B cell (primary cell): ENCODE measurements at regions of chr5 and their contacts with region 1.

Region 1: GRCh38 chr5:178232124-178232919 is at the start of gene PHYKPL:
- DNase-seq: peak; percentile 83
- ATAC-seq: peak; percentile 71
- H3K4me3 ChIP-seq: peak within 1 kb of the TSS; percentile 49 to 85 (median 71)
- H3K4me3 Mint-ChIP-seq: peak within 1 kb of the TSS; percentile 87
- H3K27ac ChIP-seq: peak within 1 kb of the TSS; percentile 77 to 88
- H3K27ac Mint-ChIP-seq: peak within 1 kb of the TSS; percentile 93
- H3K4me1 ChIP-seq: peaks cover 21 to 46% of the 10 kb centered on the region in 2 donors
- H3K4me1 Mint-ChIP-seq: peaks cover 50% of the 10 kb centered on the region
- H3K27me3 ChIP-seq: no peaks in the 10 kb centered on the region
- H3K27me3 Mint-ChIP-seq: no peaks in the 10 kb centered on the region
- CTCF ChIP-seq: no peak
- total RNA-seq, gene PHYKPL: 263 and 275 TPM in 2 replicates

Region 2: DNA sequence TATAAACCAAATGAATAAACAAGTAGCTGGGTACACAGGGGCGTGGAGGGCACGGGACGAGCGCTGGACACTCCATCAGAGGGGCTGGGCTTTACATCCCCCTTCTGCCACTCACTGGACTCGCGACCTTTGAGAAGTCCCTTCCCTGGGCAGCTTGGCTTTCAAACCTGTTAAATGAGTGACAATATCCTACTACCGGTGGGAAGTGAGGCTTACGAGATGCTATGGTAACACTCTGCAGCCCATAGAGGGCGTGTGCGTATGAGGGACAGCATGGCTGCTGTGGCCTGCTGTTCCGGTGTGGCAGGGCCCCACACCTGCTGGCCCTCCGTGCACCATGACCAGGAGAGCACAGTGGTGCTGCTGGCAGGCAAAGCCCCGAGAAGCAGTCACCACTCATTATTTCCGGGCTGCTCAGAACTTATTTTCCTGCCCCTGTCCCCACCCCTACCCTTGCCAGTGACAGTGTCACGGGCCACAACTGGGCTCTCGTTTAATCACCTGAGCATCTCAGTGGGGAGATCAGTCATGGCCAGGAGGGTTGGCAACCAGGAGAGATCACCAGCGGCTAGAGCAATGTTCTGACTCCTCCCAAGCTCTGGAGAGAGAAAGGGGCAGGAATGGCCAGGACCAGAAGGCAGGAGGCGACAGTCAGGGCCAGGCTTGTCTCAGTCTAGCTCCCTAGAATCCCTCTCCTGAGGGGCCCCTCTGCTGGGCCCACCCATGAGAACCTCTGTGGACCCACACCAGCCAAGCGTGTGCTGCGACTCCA is 1826.5 kb before region 1 on chr5:
- CTCF ChIA-PET with region 1: no interaction called
- POLR2A ChIA-PET with region 1: no interaction called
- intact Hi-C with region 1: no loop called
- DNase-seq: no peak
- ATAC-seq: no peak
- H3K4me3 ChIP-seq: no peak overlapping the region
- H3K4me3 Mint-ChIP-seq: no peak overlapping the region
- H3K27ac ChIP-seq: no peak overlapping the region
- H3K27ac Mint-ChIP-seq: no peak overlapping the region
- H3K4me1 ChIP-seq: no peaks in the 10 kb centered on the region
- H3K4me1 Mint-ChIP-seq: no peaks in the 10 kb centered on the region
- H3K27me3 ChIP-seq: no peaks in the 10 kb centered on the region
- H3K27me3 Mint-ChIP-seq: no peaks in the 10 kb centered on the region
- CTCF ChIP-seq: no peak

Region 3: GRCh38 chr5:178204182-178204894 is 28.0 kb before region 1 on chr5 and contains the start of gene HNRNPAB:
- CTCF ChIA-PET with region 1: interaction called, 4 read pairs
- POLR2A ChIA-PET with region 1: interaction called, 12 read pairs
- intact Hi-C with region 1: loop called (anchors 1 kb)
- DNase-seq: peak; percentile 99
- ATAC-seq: peak; percentile 80
- H3K4me3 ChIP-seq: peak within 1 kb of the TSS; percentile 60 to 94 (median 80)
- H3K4me3 Mint-ChIP-seq: peak within 1 kb of the TSS; percentile 99
- H3K27ac ChIP-seq: peak within 1 kb of the TSS; percentile 55 to 79
- H3K27ac Mint-ChIP-seq: peak within 1 kb of the TSS; percentile 100
- H3K4me1 ChIP-seq: peaks cover 12 to 18% of the 10 kb centered on the region in 2 donors
- H3K4me1 Mint-ChIP-seq: peaks cover 30% of the 10 kb centered on the region
- H3K27me3 ChIP-seq: no peaks in the 10 kb centered on the region
- H3K27me3 Mint-ChIP-seq: no peaks in the 10 kb centered on the region
- CTCF ChIP-seq: no peak
- total RNA-seq, gene HNRNPAB: 70.6 and 75.1 TPM in 2 replicates

Region 4: GRCh38 chr5:178324481-178325310 is 92.4 kb after region 1 on chr5:
- CTCF ChIA-PET with region 1: no interaction called
- POLR2A ChIA-PET with region 1: no interaction called
- intact Hi-C with region 1: no loop called
- DNase-seq: peak; percentile 36
- ATAC-seq: peak; percentile 71
- H3K4me3 ChIP-seq: peak overlapping the region in 3 of 5 experiments; percentile 8 to 29 (median 26)
- H3K4me3 Mint-ChIP-seq: peak overlapping the region; percentile 72
- H3K27ac ChIP-seq: no peak overlapping the region
- H3K27ac Mint-ChIP-seq: peak overlapping the region; percentile 50
- H3K4me1 ChIP-seq: peaks cover 4 to 22% of the 10 kb centered on the region in 2 donors
- H3K4me1 Mint-ChIP-seq: peaks cover 17% of the 10 kb centered on the region
- H3K27me3 ChIP-seq: peaks cover 0 to 3% (median 0%) of the 10 kb centered on the region in 4 experiments
- H3K27me3 Mint-ChIP-seq: peaks cover 8% of the 10 kb centered on the region
- CTCF ChIP-seq: no peak

Region 5: GRCh38 chr5:178551059-178551458 is 318.7 kb after region 1 on chr5:
- CTCF ChIA-PET with region 1: interaction called, 12 read pairs
- POLR2A ChIA-PET with region 1: no interaction called
- intact Hi-C with region 1: no loop called
- DNase-seq: no peak
- ATAC-seq: no peak
- H3K4me3 ChIP-seq: no peak overlapping the region
- H3K4me3 Mint-ChIP-seq: no peak overlapping the region
- H3K27ac ChIP-seq: no peak overlapping the region
- H3K27ac Mint-ChIP-seq: no peak overlapping the region
- H3K4me1 ChIP-seq: no peaks in the 10 kb centered on the region
- H3K4me1 Mint-ChIP-seq: no peaks in the 10 kb centered on the region
- H3K27me3 ChIP-seq: peaks cover 0 to 5% (median 0%) of the 10 kb centered on the region in 4 experiments
- H3K27me3 Mint-ChIP-seq: peaks cover 7% of the 10 kb centered on the region
- CTCF ChIP-seq: peak; percentile 30

Region 6: DNA sequence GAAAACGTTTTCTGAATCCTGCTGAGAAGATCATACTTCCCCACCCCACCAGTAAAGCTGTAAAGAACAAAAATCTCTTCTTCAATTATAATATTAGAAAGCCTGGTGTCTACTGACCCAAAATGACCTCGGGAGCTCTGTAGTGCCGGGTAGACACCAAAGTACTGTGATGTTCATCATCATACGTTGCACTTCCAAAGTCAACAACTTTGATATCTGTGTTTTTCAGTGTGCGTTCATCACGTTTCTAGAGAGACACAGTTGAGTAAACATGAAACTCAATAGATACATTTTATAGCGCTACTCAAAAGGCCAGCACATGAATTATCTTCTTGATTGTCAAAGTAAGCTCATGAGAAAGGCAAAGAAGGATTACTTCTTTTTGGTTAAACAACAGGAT is 380.0 kb after region 1 on chr5:
- CTCF ChIA-PET with region 1: no interaction called
- POLR2A ChIA-PET with region 1: no interaction called
- intact Hi-C with region 1: no loop called
- DNase-seq: no peak
- ATAC-seq: no peak
- H3K4me3 ChIP-seq: no peak overlapping the region
- H3K4me3 Mint-ChIP-seq: no peak overlapping the region
- H3K27ac ChIP-seq: no peak overlapping the region
- H3K27ac Mint-ChIP-seq: no peak overlapping the region
- H3K4me1 ChIP-seq: no peaks in the 10 kb centered on the region
- H3K4me1 Mint-ChIP-seq: peaks cover 1% of the 10 kb centered on the region
- H3K27me3 ChIP-seq: no peaks in the 10 kb centered on the region
- H3K27me3 Mint-ChIP-seq: no peaks in the 10 kb centered on the region
- CTCF ChIP-seq: no peak